H1 (cell line): ENCODE measurements at regions of chr11 and their contacts with region 1.

Region 1: DNA sequence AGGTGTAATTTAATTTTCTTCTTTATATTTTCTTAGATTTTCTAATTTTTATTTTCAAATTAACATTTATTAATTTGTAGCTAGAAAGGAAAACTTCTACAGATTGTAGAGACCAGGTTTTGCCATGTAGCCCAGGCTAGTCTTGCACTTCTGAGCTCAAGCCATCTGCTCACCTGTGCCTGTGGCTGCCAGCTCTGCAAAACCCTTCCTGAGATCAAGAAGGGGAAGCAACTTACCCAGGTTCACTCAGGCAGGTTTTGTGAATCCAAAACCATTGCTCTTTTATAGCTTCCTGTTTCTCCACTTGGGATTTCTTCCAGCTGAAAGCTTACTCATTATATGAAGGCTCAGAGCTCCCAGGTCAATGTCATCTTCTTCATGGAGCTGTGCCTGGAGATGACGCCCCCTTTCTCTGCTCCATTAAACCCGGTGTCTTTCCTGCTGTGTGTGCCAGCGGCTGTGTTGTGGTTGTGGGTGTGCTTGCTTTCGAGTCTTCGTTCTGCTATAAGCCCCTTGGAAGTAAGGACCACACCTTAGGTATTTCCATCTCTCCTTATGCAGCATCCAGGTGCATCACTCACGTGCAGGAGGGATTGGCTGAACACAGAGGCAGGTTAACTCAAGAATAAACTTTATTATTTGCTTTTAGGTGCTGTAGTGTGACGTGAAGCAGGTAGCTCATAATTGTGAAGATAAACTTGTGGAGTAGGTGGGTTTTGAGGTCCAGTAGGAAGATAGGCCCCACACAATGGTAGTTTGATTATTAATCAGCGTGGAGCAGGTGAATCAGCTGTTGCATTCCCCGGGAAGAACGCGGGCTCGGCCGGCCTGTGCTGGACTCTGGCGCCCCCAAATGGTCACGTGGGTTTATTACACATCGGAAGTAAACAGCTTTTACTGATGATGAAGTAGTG is 42.2 kb upstream of the INCENP start:
- DNase-seq: peak; percentile 25 to 95
- H3K4me3 ChIP-seq: no peak overlapping the region
- H3K27ac ChIP-seq: no peak overlapping the region
- H3K4me1 ChIP-seq: no peaks in the 10 kb centered on the region
- H3K27me3 ChIP-seq: no peaks in the 10 kb centered on the region
- CTCF ChIP-seq: peak; percentile 84 to 94 (median 89)
- EP300 ChIP-seq: no peak
- POLR2A ChIP-seq: no peak
- RAD21 ChIP-seq: peak; percentile 98 to 99

Region 2: GRCh38 chr11:61899146-61899841 is 182.3 kb before region 1 on chr11:
- CTCF ChIA-PET with region 1: interaction called, 198 read pairs
- POLR2A ChIA-PET with region 1: interaction called, 3 read pairs
- DNase-seq: peak; percentile 78 to 100
- H3K4me3 ChIP-seq: no peak overlapping the region
- H3K27ac ChIP-seq: no peak overlapping the region
- H3K4me1 ChIP-seq: peaks cover 0 to 18% (median 4%) of the 10 kb centered on the region in 4 experiments; a peak in 6 of 7 replicates
- H3K27me3 ChIP-seq: no peaks in the 10 kb centered on the region
- CTCF ChIP-seq: peak in 2 of 3 experiments; percentile 99 to 100; a peak in 3 of 4 replicates
- EP300 ChIP-seq: no peak
- POLR2A ChIP-seq: no peak
- RAD21 ChIP-seq: peak; percentile 92 to 95

Region 3: DNA sequence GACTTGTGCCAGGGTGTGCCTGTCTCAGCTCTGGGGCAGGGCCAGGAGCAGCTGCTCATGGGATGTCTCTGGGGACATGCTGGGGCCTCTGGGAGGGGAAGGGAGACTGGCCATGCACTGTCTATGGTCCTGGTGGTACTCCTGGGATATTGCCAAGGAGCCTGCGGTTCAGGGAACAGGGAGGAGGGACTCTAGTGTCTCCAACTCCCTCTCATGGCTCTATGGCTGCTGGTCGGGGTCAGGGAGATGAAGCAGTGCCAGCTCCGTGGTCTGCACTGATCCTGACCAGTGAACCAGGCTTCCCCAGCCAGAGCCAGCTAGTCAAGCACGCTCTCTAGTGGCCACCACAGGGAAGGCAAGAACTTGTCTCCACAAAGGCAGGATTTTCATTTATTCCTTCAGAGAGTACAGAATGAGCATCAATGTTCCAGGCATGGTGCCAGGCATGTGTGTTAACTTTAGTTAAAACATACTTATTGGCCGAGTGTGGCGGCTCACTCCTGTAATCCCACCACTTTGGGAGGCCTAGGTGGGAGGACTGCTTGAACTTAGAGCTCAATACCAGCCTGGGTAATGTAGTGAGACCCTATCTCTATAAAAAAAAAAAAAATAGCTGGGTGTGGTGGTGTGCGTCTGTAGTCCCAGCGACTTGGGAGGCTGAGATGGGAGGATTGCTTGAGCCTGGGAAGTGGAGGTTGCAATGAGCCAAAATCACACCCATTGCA is 134.0 kb before region 1 on chr11:
- CTCF ChIA-PET with region 1: interaction called, 170 read pairs
- POLR2A ChIA-PET with region 1: interaction called, 4 read pairs
- DNase-seq: peak; percentile 60 to 86
- H3K4me3 ChIP-seq: no peak overlapping the region
- H3K27ac ChIP-seq: no peak overlapping the region
- H3K4me1 ChIP-seq: no peaks in the 10 kb centered on the region; a peak in 1 of 7 replicates
- H3K27me3 ChIP-seq: no peaks in the 10 kb centered on the region
- CTCF ChIP-seq: peak; percentile 89 to 99 (median 98)
- EP300 ChIP-seq: no peak
- POLR2A ChIP-seq: no peak
- RAD21 ChIP-seq: peak; percentile 100

Region 4: GRCh38 chr11:61967116-61967923 is 114.3 kb before region 1 on chr11 and contains the start of gene FTH1:
- CTCF ChIA-PET with region 1: interaction called, 31 read pairs
- POLR2A ChIA-PET with region 1: interaction called, 25 read pairs
- DNase-seq: peak; percentile 56 to 90
- H3K4me3 ChIP-seq: peak within 1 kb of the TSS; percentile 89 to 97 (median 96)
- H3K27ac ChIP-seq: peak within 1 kb of the TSS; percentile 96
- H3K4me1 ChIP-seq: peaks cover 9 to 20% (median 13%) of the 10 kb centered on the region in 4 experiments
- H3K27me3 ChIP-seq: no peaks in the 10 kb centered on the region
- CTCF ChIP-seq: no peak
- EP300 ChIP-seq: peak in 1 of 2 experiments; percentile 57; a peak in 2 of 3 replicates
- POLR2A ChIP-seq: peak; percentile 90 to 96
- RAD21 ChIP-seq: no peak
- total RNA-seq, gene FTH1: 1,461 and 1,535 TPM in 2 replicates

Region 5: GRCh38 chr11:62013591-62014476 is 67.8 kb before region 1 on chr11:
- CTCF ChIA-PET with region 1: interaction called, 14 read pairs
- POLR2A ChIA-PET with region 1: no interaction called
- DNase-seq: no peak
- H3K4me3 ChIP-seq: no peak overlapping the region; a peak in 1 of 8 replicates
- H3K27ac ChIP-seq: no peak overlapping the region
- H3K4me1 ChIP-seq: peaks cover 0 to 3% (median 0%) of the 10 kb centered on the region in 4 experiments; a peak in 1 of 7 replicates
- H3K27me3 ChIP-seq: no peaks in the 10 kb centered on the region
- CTCF ChIP-seq: no peak
- EP300 ChIP-seq: no peak
- POLR2A ChIP-seq: no peak
- RAD21 ChIP-seq: no peak

Region 6: DNA sequence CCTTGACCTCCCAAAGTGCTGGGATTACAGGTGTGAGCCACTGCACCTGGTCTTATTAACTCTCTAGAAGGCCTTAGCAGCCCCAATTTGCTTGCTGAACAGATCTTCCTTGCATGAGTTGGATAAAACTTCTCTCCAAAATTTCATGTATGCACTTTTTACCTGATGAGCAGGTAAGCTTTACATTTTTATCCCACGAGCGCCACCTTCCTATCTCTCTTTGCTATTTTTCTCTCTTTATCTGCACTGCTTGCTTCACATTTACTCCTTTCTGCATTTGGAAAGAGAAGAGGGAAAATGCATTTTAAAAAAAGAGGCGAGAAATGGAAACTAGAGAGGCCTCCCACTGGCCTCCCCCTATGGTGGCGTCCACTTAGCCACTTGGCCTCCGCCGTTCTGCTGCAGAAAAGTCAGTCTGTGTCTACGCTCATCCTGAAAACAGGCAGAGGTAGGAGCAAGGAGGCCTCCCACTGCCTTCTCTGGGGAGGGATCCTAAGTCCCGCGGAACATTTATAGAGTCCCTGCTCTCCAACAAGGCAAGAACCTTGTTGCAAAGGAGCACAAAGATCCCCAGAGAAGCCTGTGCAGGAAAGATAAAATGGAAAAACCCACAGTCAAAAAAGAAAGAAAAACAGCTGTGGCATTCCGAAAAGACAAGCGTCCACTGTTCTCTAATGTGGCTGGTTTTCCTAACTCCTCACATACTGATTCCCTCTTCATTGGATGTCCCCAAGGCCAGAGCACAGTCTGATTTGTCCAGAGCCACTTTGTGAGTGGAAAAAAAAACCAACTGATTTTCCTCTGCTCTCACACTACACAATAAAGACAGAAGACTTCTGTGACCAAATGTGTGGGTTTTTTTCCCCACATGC is 20.0 kb before region 1 on chr11:
- CTCF ChIA-PET with region 1: interaction called, 84 read pairs
- POLR2A ChIA-PET with region 1: interaction called, 3 read pairs
- DNase-seq: no peak
- H3K4me3 ChIP-seq: no peak overlapping the region
- H3K27ac ChIP-seq: no peak overlapping the region
- H3K4me1 ChIP-seq: no peaks in the 10 kb centered on the region
- H3K27me3 ChIP-seq: no peaks in the 10 kb centered on the region
- CTCF ChIP-seq: peak in 1 of 3 experiments; percentile 28; a peak in 1 of 4 replicates
- EP300 ChIP-seq: no peak
- POLR2A ChIP-seq: no peak
- RAD21 ChIP-seq: peak; percentile 48 to 58

Region 7: DNA sequence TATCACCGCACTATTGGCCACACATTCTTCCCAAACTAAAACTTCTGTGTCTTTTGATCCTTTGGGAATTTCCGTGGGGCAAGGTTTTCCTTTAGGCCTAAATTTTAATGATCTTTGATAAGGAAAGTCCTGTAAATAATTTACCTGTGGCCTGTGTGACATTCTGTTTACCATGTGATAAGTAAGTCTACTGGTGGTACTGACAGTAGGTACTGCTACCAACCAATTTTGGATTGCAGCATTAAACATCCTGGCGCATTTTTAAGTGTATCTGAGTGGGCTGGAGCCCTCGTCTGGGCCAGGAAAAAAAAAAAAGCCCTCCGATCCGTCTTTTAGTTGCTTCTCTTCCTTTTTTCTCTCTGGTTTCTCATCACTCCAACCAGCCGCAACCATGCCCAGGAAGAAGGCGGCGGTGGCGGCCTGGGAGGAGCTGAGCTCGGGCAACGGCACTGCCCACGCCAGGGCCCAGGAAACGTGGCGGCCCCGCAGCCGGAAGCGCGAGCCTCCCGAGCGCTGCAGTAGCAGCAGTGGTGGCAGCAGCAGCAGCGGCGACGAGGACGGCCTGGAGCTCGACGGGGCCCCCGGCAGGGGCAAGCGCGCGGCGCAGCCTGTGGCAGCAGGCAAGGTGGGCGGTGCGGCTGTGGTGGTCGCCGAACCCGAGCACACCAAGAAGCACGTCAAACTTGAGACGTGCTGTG is 289.3 kb after region 1 on chr11:
- CTCF ChIA-PET with region 1: no interaction called
- POLR2A ChIA-PET with region 1: no interaction called
- DNase-seq: no peak
- H3K4me3 ChIP-seq: no peak overlapping the region
- H3K27ac ChIP-seq: no peak overlapping the region
- H3K4me1 ChIP-seq: no peaks in the 10 kb centered on the region
- H3K27me3 ChIP-seq: no peaks in the 10 kb centered on the region
- CTCF ChIP-seq: peak; percentile 23 to 39 (median 24); a peak in 3 of 4 replicates
- EP300 ChIP-seq: no peak
- POLR2A ChIP-seq: no peak
- RAD21 ChIP-seq: no peak; a peak in 1 of 4 replicates